Activated CD8-positive, alpha-beta T cell treated with anti-CD3 and anti-CD28 coated beads for 36 hours (primary cell): ENCODE measurements at regions of chr7 and their contacts with region 1.

Region 1: DNA sequence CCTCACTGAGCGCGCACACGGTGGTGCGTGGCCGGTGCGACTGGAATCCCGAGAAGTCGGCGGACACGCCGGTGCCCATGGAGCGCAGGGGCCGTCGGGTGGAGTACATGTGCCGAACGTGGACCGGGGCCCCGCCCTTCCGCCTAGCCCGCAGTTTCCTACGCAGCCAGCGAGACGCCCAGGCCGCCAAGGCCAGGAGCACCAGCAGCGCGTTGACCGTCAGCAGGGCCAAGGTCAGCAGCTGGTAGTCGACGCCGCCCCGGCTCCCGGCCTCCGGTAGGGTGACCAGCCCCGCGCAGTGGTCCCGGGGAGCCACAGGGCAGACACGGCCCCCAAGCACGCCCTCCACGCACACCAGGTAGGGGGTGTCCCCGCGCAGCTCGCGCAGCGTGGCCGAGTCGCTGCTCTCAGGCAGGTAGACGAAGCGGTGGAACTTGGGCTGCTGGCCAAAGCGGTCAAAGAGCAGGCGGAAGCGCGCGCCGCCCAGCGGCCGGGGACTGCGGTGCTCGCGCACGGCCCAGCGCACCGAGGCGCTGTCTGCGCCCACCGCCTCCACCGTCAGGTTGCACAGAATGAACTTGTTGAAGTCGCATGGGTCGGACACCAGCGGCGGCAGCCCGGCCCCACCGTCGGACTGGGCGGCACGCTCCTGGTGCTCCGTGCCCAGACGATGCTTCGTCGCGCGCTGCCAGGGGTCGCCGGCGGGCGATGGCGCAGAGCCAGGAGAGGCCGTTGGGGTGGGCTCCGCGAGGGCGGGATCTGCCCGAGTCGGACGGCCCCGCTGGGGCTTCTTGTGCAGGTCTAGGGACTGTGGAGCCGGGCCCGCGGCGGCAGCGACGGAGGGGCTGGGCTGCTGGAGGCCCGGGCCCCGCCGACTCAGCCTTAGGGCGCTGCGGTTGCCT is 2.2 kb downstream of the TRIL start:
- DNase-seq: peak; percentile 49
- ATAC-seq: peak; percentile 45
- H3K4me3 Mint-ChIP-seq: no peak overlapping the region
- H3K27ac Mint-ChIP-seq: no peak overlapping the region
- H3K4me1 Mint-ChIP-seq: peaks cover 9% of the 10 kb centered on the region
- H3K27me3 Mint-ChIP-seq: peaks cover 58% of the 10 kb centered on the region
- CTCF ChIP-seq: peak; percentile 44

Region 2: GRCh38 chr7:28939844-28940544 is 16.0 kb before region 1 on chr7:
- CTCF ChIA-PET with region 1: interaction called, 10 read pairs
- POLR2A ChIA-PET with region 1: interaction called, 3 read pairs
- intact Hi-C with region 1: no loop called
- DNase-seq: no peak
- ATAC-seq: no peak
- H3K4me3 Mint-ChIP-seq: no peak overlapping the region
- H3K27ac Mint-ChIP-seq: no peak overlapping the region
- H3K4me1 Mint-ChIP-seq: no peaks in the 10 kb centered on the region
- H3K27me3 Mint-ChIP-seq: peaks cover 10% of the 10 kb centered on the region
- CTCF ChIP-seq: no peak